Dorsolateral prefrontal cortex (tissue), 120 donors: ENCODE measurements at regions of chrX and their contacts with region 1.

Region 1: GRCh38 chrX:130916636-130917422 is 13.8 kb upstream of the ENOX2 start:
- DNase-seq: peak in 4 of 10 donors; percentile 21 to 47 (median 33)
- H3K4me3 ChIP-seq: no peak overlapping the region
- H3K27ac ChIP-seq: no peak overlapping the region
- H3K27me3 ChIP-seq: peaks cover 0 to 86% (median 25%) of the 10 kb centered on the region in 45 donors
- CTCF ChIP-seq: peak; percentile 24 to 93 (median 82)

Region 2: DNA sequence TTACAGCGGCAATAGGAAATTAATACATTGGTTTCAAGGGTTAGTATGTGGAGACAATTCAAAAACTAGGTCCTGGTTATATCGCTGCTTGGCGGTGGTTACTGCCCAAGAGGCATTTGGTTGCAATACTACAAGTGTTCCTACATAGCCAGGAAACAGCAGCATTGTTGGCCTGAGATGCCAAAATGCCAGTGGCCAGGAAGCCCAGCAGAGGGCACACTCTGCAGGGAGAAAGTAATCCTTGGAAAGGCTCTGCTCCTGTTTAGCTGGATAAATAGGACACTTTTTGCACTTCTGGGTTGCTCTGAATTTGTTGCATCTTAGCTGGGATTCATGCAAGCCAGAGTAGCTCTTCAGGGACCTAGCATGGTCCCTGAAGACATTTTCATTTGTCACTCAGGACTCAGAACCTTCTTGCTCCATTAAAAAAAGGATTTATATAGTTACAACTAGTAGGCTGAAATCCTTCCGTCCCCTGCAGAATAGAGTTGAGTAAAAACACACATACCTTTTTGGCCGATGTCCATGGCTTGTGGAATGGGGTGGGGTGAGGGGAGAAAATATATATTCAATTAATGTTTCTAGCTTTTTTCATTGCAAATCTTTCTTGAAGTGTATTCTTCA is 523.3 kb before region 1 on chrX:
- intact Hi-C with region 1: loop called (anchors 2 to 5 kb)
- DNase-seq: peak in 9 of 10 donors; percentile 19 to 72 (median 64)
- H3K4me3 ChIP-seq: no peak overlapping the region
- H3K27ac ChIP-seq: no peak overlapping the region
- H3K27me3 ChIP-seq: peaks cover 0 to 56% (median 9%) of the 10 kb centered on the region in 45 donors
- CTCF ChIP-seq: peak; percentile 22 to 83 (median 71)

Region 3: GRCh38 chrX:130539721-130540321 is 377.0 kb before region 1 on chrX:
- intact Hi-C with region 1: loop called (anchors 5 to 10 kb)
- DNase-seq: peak in 6 of 10 donors; percentile 24 to 52 (median 46)
- H3K4me3 ChIP-seq: no peak overlapping the region
- H3K27ac ChIP-seq: no peak overlapping the region
- H3K27me3 ChIP-seq: peaks cover 0 to 84% (median 28%) of the 10 kb centered on the region in 45 donors
- CTCF ChIP-seq: peak in 55 of 56 donors; percentile 35 to 80 (median 62)

Region 4: DNA sequence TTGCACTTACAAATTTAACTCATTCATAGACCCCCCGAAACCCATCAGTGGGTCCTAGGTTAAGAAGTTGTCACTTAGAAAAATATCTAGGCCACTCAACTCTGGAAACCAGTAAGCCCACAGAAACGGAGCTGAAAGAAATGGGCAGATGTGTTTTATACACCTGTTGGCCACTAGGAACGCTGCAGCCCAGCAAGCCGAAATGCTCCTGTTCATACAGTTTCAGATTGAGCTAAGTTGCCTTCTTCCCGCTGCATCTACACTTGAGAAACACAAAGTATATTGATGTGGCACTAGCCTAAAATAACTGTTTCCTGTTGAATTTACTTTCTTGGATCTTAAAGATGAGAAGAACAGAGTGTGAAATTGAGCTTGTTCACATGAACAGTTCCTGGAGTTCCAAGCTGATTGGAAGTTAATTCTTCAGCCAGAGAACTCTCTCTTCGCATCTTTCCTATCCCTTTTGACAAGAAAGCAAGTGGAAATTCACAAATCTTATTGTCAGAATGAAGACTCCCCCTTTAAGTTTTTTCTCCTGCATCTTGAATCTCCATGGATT is 340.9 kb before region 1 on chrX:
- intact Hi-C with region 1: loop called in 1 of 2 experiments (anchors 5 kb)
- DNase-seq: peak in 6 of 10 donors; percentile 16 to 48 (median 36)
- H3K4me3 ChIP-seq: peak overlapping the region in 2 of 59 donors; percentile 6 to 8
- H3K27ac ChIP-seq: peak overlapping the region in 1 of 59 donors; percentile 23
- H3K27me3 ChIP-seq: peaks cover 0 to 60% (median 18%) of the 10 kb centered on the region in 45 donors
- CTCF ChIP-seq: peak; percentile 38 to 79 (median 64)

Region 5: GRCh38 chrX:131010186-131010585 is 93.4 kb after region 1 on chrX:
- intact Hi-C with region 1: no loop called
- DNase-seq: no peak
- H3K4me3 ChIP-seq: no peak overlapping the region
- H3K27ac ChIP-seq: no peak overlapping the region
- H3K27me3 ChIP-seq: peaks cover 0 to 72% (median 31%) of the 10 kb centered on the region in 45 donors
- CTCF ChIP-seq: no peak